Mammary epithelial cell (primary cell): ENCODE measurements at regions of chr3 and their contacts with region 1.

Region 1: GRCh38 chr3:62558549-62559112 is 185.3 kb upstream of the FEZF2 start:
- DNase-seq: no peak
- H3K4me3 ChIP-seq: no peak overlapping the region
- H3K27ac ChIP-seq: no peak overlapping the region
- H3K4me1 ChIP-seq: peaks cover 15% of the 10 kb centered on the region
- H3K27me3 ChIP-seq: no peaks in the 10 kb centered on the region
- CTCF ChIP-seq: peak; percentile 44 to 63

Region 2: GRCh38 chr3:62201438-62202035 is 357.1 kb before region 1 on chr3:
- CTCF ChIA-PET with region 1: no interaction called
- dilution Hi-C with region 1: no loop called
- in situ Hi-C with region 1: loop called in 1 of 2 experiments (anchors 10 kb)
- intact Hi-C with region 1: loop called (anchors 1 kb)
- DNase-seq: peak; percentile 14
- H3K4me3 ChIP-seq: no peak overlapping the region
- H3K27ac ChIP-seq: no peak overlapping the region
- H3K4me1 ChIP-seq: no peaks in the 10 kb centered on the region
- H3K27me3 ChIP-seq: no peaks in the 10 kb centered on the region
- CTCF ChIP-seq: peak; percentile 55 to 63

Region 3: GRCh38 chr3:62318750-62319569 is 239.7 kb before region 1 on chr3:
- CTCF ChIA-PET with region 1: no interaction called
- dilution Hi-C with region 1: no loop called
- in situ Hi-C with region 1: loop called in 1 of 2 experiments (anchors 10 kb)
- intact Hi-C with region 1: no loop called
- DNase-seq: peak; percentile 87
- H3K4me3 ChIP-seq: peak overlapping the region; percentile 65 to 70 (median 67)
- H3K27ac ChIP-seq: peak overlapping the region; percentile 45
- H3K4me1 ChIP-seq: no peaks in the 10 kb centered on the region
- H3K27me3 ChIP-seq: no peaks in the 10 kb centered on the region
- CTCF ChIP-seq: no peak

Region 4: DNA sequence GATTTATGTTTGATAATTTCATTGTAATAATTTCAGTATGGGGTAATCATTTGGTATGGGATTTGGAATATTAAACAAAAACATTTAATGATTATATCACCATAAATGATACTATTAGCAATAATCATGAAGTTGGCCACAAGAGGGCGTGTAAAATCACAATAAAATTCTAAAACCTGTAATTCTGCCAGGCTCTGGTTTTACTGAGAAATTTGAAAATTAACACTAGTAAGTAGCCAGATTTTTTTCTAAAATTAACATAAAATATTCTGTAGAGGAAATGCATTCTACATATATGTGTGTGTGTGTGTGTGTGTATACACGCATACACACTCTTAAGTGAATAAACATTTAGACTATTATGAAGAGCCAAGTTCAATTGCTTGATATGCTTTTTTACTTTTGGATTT is 225.8 kb before region 1 on chr3:
- CTCF ChIA-PET with region 1: no interaction called
- dilution Hi-C with region 1: no loop called
- in situ Hi-C with region 1: loop called in 1 of 2 experiments (anchors 10 kb)
- intact Hi-C with region 1: loop called (anchors 1 kb)
- DNase-seq: peak; percentile 1
- H3K4me3 ChIP-seq: no peak overlapping the region
- H3K27ac ChIP-seq: no peak overlapping the region
- H3K4me1 ChIP-seq: no peaks in the 10 kb centered on the region
- H3K27me3 ChIP-seq: no peaks in the 10 kb centered on the region
- CTCF ChIP-seq: peak; percentile 39 to 52

Region 5: GRCh38 chr3:62343755-62344154 is 214.9 kb before region 1 on chr3:
- CTCF ChIA-PET with region 1: no interaction called
- dilution Hi-C with region 1: no loop called
- in situ Hi-C with region 1: loop called in 1 of 2 experiments (anchors 5 kb)
- intact Hi-C with region 1: no loop called
- DNase-seq: no peak
- H3K4me3 ChIP-seq: no peak overlapping the region
- H3K27ac ChIP-seq: no peak overlapping the region
- H3K4me1 ChIP-seq: no peaks in the 10 kb centered on the region
- H3K27me3 ChIP-seq: no peaks in the 10 kb centered on the region
- CTCF ChIP-seq: no peak

Region 6: GRCh38 chr3:62481965-62482364 is 76.7 kb before region 1 on chr3:
- CTCF ChIA-PET with region 1: no interaction called
- dilution Hi-C with region 1: no loop called
- in situ Hi-C with region 1: no loop called
- intact Hi-C with region 1: no loop called
- DNase-seq: no peak
- H3K4me3 ChIP-seq: no peak overlapping the region
- H3K27ac ChIP-seq: no peak overlapping the region
- H3K4me1 ChIP-seq: no peaks in the 10 kb centered on the region
- H3K27me3 ChIP-seq: no peaks in the 10 kb centered on the region
- CTCF ChIP-seq: no peak